ENCODE measurements at regions of chr1 and their contacts with region 1.

Region 1: GRCh38 chr1:58515794-58516401 is 30.6 kb downstream of the OMA1 start:
- DNase-seq: no peak
- H3K4me3 Mint-ChIP-seq: no peak overlapping the region
- H3K27ac Mint-ChIP-seq: no peak overlapping the region
- H3K4me1 Mint-ChIP-seq: peaks cover 14% of the 10 kb centered on the region
- H3K27me3 Mint-ChIP-seq: no peaks in the 10 kb centered on the region

Region 2: GRCh38 chr1:58597996-58598395 is 82.1 kb after region 1 on chr1:
- intact Hi-C with region 1: no loop called
- DNase-seq: no peak
- H3K4me3 Mint-ChIP-seq: no peak overlapping the region
- H3K27ac Mint-ChIP-seq: no peak overlapping the region
- H3K4me1 Mint-ChIP-seq: peaks cover 2% of the 10 kb centered on the region
- H3K27me3 Mint-ChIP-seq: peaks cover 56% of the 10 kb centered on the region

Region 3: DNA sequence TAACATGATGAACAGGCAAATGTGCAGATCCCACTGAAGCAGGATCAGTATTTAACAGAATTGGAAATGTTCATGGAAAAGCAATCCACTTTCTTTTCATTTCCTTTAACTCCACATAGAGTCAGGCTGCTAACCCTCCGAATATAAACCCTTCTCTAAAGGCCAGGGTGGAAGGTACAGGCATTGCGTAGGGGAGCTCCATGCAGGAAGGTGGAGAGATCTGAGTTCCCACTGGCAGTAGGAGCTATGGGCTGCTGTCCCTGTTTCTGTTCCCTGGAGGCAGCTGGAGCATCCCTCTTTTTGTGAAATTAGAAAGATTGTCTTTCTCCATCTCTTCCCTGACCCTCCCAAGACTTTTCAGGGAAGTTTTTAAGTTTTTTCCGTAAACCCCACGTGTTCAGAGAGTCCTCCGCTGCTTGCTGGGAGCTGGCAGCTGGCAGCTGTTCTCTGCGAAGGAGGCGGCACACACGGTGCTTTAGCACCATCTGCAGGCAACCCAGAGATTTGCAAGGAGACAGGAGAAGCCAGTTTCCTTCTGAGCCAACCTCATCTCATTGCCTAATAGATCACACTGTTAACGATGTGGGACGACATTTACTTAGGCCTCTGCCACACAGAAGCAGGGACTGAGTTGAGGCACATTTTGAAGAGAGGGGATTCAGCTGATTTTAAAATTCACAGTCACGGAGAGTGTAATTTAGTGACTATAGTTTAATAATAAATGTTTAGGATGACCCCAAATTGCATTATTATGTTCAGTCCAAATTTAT is 1243.4 kb after region 1 on chr1:
- intact Hi-C with region 1: loop called (anchors 5 kb)
- DNase-seq: peak; percentile 56
- H3K4me3 Mint-ChIP-seq: no peak overlapping the region
- H3K27ac Mint-ChIP-seq: no peak overlapping the region
- H3K4me1 Mint-ChIP-seq: peaks cover 2% of the 10 kb centered on the region
- H3K27me3 Mint-ChIP-seq: no peaks in the 10 kb centered on the region

Measured in activated T-helper 2 cell treated with anti-CD3 and anti-CD28 coated beads, Interferon-gamma antibody, Interleukin-2, Interleukin-4, amounts not matched to agents 10 μg/mL and 5 μg/mL and 100 μg/mL, durations not matched to agents 14 hours and 24 hours and 36 hours (primary cell).